GM18951 (cell line): ENCODE measurements at regions of chr7 and their contacts with region 1.

Region 1: GRCh38 chr7:86469680-86470295 is 173.9 kb upstream of the GRM3 start:
- POLR2A ChIP-seq: no peak

Region 2: DNA sequence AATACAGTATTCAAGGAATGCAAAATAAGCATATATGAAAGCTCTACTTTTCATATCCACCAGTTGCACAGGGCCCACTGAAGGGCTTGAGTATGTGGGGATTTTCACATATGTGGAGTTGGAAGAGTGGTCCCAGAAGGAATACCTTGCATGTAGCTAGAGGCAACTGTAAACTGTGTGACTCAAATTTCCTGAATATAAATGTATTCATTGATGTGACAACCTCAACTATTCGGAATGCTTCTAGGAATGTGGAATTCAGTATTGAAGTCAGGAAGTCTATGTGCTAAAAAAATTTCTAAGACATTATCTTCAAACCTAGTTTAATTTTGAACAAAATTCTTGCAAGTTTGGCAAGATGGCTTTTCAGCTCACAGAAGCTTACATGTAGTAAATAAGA is 587.5 kb before region 1 on chr7:
- in situ Hi-C with region 1: loop called (anchors 10 kb)
- POLR2A ChIP-seq: no peak